ENCODE measurements at regions of chr22 and their contacts with region 1.

Region 1: DNA sequence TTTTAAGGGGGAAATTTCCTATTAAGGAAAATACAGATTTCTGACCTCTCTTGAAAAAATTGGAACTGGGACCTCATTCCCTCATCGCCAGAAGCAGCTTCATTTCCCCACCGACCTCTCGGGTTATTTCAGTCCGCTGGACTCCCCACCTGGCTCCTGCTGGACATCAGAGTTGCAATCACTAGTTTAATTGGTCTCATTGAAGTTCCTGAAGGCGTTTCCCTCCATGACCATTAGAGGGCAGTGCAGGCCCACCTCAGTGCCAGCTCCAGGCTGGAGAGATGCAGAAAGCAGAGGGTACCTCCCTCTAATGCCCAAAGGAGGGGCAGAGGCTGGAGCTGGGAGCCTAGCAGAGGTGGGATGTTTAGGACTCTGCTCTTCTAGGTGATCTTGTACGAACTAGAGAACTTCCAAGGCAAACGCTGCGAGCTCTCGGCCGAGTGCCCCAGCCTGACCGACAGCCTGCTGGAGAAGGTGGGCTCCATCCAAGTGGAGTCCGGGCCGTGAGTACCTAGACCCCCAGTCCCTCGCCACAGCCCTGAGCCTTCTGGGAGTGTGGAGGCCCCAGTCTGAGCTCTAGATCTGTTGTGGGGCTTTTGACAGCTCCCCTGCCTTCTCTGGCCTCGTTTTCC is 2.7 kb downstream of the CRYBB3 start:
- DNase-seq: peak; percentile 29
- ATAC-seq: peak; percentile 95
- H3K4me3 ChIP-seq: no peak overlapping the region
- H3K27ac ChIP-seq: no peak overlapping the region
- H3K4me1 ChIP-seq: no peaks in the 10 kb centered on the region
- H3K27me3 ChIP-seq: no peaks in the 10 kb centered on the region
- CTCF ChIP-seq: peak; percentile 52 to 93 (median 90); a peak in 5 of 6 replicates
- POLR2A ChIP-seq: no peak
- RAD21 ChIP-seq: peak; percentile 65

Region 2: DNA sequence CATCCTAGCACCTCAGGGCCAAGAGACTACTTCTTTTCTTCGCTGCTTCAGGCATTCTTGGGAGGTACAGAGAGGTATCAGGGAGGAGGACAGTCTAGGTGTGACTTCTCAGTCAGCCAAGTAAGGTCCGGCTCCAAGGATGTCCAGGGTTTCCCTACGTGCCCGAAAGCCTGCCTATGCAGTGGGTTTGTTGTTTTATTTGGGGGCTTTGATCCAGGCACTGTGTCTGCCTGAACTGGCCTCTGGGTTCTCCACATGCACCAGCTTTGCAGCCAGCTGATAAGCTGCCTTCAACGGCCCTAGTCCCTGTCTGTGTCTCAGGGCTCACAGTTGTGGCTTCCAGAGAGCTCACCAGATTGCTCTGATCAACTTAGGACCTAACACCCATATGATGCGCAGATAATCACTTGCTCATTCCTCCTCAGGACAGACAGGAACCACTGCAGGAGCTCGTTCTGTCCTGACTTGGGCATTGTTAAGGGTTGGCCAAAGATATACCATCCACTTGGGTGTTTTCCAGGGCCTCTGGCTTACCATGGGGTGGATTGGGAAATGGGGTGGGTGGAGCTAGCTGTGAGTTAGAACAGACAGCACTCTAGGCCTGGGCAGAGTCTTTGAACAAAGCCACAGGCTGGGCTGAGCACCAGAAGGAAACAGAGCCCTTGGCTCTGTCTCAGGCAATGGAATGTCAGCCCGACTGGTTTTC is 48.3 kb before region 1 on chr22:
- CTCF ChIA-PET with region 1: no interaction called
- POLR2A ChIA-PET with region 1: no interaction called
- RAD21 ChIA-PET with region 1: no interaction called
- intact Hi-C with region 1: no loop called
- DNase-seq: no peak
- ATAC-seq: peak; percentile 76
- H3K4me3 ChIP-seq: no peak overlapping the region
- H3K27ac ChIP-seq: no peak overlapping the region
- H3K4me1 ChIP-seq: peaks cover 5 to 6% of the 10 kb centered on the region in 2 experiments; a peak in 2 of 4 replicates
- H3K27me3 ChIP-seq: no peaks in the 10 kb centered on the region
- CTCF ChIP-seq: no peak
- POLR2A ChIP-seq: no peak
- RAD21 ChIP-seq: no peak

Region 3: GRCh38 chr22:25334162-25334490 is 131.7 kb after region 1 on chr22:
- CTCF ChIA-PET with region 1: interaction called, 14 read pairs
- POLR2A ChIA-PET with region 1: no interaction called
- RAD21 ChIA-PET with region 1: no interaction called
- intact Hi-C with region 1: loop called (anchors 10 kb)
- DNase-seq: peak; percentile 36
- ATAC-seq: peak; percentile 96
- H3K4me3 ChIP-seq: no peak overlapping the region
- H3K27ac ChIP-seq: no peak overlapping the region
- H3K4me1 ChIP-seq: no peaks in the 10 kb centered on the region
- H3K27me3 ChIP-seq: no peaks in the 10 kb centered on the region
- CTCF ChIP-seq: peak; percentile 49 to 87 (median 80); a peak in 5 of 6 replicates
- POLR2A ChIP-seq: no peak
- RAD21 ChIP-seq: peak; percentile 63